Panc1 (cell line): ENCODE measurements at regions of chr2 and their contacts with region 1.

Region 1: GRCh38 chr2:61538200-61538919 is at the start of gene XPO1:
- DNase-seq: peak; percentile 97
- ATAC-seq: peak; percentile 93
- H3K4me3 ChIP-seq: peak within 1 kb of the TSS; percentile 95 to 97
- H3K27ac ChIP-seq: peak within 1 kb of the TSS; percentile 97
- H3K4me1 ChIP-seq: peaks cover 27% of the 10 kb centered on the region
- H3K27me3 ChIP-seq: no peaks in the 10 kb centered on the region
- CTCF ChIP-seq: no peak
- total RNA-seq, gene XPO1: 189 TPM

Region 2: DNA sequence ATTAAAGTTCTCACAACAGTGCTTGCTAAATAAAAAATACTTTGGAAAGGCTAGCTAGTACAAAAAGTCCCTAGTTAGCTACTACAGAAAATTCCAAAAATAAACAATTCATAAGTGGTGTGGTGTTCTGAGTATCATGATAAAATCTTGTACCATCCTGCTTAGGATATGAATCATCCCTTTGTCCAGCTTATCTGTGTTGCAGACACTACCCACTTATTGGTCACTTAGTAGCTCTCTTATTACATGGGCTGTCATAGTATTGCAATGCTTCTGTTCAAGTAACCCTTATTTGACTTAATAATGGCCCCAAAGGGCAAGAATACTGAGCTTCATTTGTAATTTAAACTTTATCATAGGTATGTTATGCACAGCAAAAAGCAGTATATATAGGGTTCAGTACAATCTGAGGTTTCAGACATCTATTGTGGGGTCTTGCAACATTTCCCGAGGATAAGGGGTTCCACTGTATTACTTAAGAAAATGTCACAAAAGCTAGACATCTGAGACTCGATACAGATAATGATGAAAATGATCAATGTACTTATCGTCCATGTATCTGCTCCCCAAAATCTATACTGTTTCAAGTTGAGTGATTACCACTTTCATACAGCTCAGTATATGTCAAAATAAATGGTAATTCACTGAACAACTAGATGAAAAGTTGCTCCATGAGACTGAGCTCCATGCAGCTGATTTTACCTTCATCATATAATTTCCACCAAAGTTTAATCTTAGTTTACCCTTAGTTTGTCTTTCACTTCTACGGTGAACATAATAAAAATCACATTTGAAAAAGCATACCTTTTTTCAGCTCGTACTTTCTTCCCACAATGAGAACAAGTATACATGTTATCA is 282.6 kb before region 1 on chr2:
- CTCF ChIA-PET with region 1: no interaction called
- POLR2A ChIA-PET with region 1: no interaction called
- in situ Hi-C with region 1: no loop called
- intact Hi-C with region 1: no loop called
- DNase-seq: no peak
- ATAC-seq: peak; percentile 71; the same call in 1 of the 2 replicates
- H3K4me3 ChIP-seq: no peak overlapping the region
- H3K27ac ChIP-seq: no peak overlapping the region
- H3K4me1 ChIP-seq: no peaks in the 10 kb centered on the region
- H3K27me3 ChIP-seq: no peaks in the 10 kb centered on the region
- CTCF ChIP-seq: no peak

Region 3: GRCh38 chr2:61450144-61450543 is 88.2 kb before region 1 on chr2:
- CTCF ChIA-PET with region 1: no interaction called
- POLR2A ChIA-PET with region 1: no interaction called
- in situ Hi-C with region 1: no loop called
- intact Hi-C with region 1: no loop called
- DNase-seq: no peak
- ATAC-seq: no peak
- H3K4me3 ChIP-seq: no peak overlapping the region
- H3K27ac ChIP-seq: no peak overlapping the region
- H3K4me1 ChIP-seq: no peaks in the 10 kb centered on the region
- H3K27me3 ChIP-seq: no peaks in the 10 kb centered on the region
- CTCF ChIP-seq: no peak

Region 4: DNA sequence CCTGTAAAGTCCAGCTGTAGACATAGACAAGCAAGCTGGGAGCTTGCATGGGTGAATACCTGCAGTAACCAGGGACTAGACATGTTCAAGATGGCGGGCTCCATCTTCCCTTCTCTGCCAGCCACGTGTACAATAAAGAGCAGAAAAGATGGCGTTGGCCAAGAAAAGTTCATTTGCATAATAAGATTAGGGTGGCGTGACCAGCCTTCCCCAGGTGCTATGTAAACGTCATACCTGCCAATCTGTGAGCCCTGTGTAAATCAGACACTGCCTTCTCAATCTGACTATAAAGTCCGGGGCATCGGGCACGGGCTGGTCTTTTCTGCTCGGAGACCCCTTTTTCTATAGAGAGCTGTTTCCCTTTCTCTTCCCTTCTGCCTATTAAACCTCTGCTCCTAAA is 101.4 kb after region 1 on chr2:
- CTCF ChIA-PET with region 1: no interaction called
- POLR2A ChIA-PET with region 1: no interaction called
- in situ Hi-C with region 1: no loop called
- intact Hi-C with region 1: loop called (anchors 5 kb)
- DNase-seq: no peak
- ATAC-seq: no peak
- H3K4me3 ChIP-seq: no peak overlapping the region
- H3K27ac ChIP-seq: no peak overlapping the region
- H3K4me1 ChIP-seq: peaks cover 9% of the 10 kb centered on the region
- H3K27me3 ChIP-seq: no peaks in the 10 kb centered on the region
- CTCF ChIP-seq: no peak

Region 5: DNA sequence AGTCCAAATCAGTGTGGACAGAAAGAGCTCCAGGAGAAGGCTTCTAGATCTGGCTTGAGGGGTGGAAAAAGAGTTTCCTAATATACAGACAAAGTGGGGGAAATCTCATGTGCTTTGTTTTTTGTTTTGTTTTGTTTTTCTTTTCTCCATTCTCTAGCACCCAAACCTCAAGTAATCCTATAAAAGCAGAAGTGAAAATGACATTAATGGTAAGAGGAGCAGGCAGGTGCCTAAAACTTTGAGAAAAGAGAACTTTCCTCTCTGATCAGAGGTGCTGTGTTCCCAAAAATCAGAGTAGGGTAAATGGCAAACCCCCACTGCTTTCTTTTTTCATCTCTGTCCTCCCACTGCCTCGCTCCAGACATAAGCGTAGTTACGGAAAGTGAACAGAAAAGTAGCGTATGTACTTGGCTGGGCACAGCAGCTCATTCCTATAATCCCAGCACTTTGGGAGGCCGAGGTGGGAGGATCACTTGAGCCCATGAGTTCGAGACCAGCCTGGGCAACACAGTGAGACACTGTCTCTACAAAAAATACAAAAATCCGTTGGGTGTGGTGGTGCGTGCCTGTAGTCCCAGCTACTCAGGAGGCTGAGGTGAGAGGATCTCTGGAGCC is 237.7 kb after region 1 on chr2:
- CTCF ChIA-PET with region 1: no interaction called
- POLR2A ChIA-PET with region 1: no interaction called
- in situ Hi-C with region 1: no loop called
- intact Hi-C with region 1: no loop called
- DNase-seq: no peak
- ATAC-seq: no peak
- H3K4me3 ChIP-seq: no peak overlapping the region
- H3K27ac ChIP-seq: no peak overlapping the region
- H3K4me1 ChIP-seq: no peaks in the 10 kb centered on the region
- H3K27me3 ChIP-seq: no peaks in the 10 kb centered on the region
- CTCF ChIP-seq: no peak

Region 6: GRCh38 chr2:61789807-61790602 is 251.6 kb after region 1 on chr2:
- CTCF ChIA-PET with region 1: no interaction called
- POLR2A ChIA-PET with region 1: no interaction called
- in situ Hi-C with region 1: no loop called
- intact Hi-C with region 1: loop called (anchors 10 kb)
- DNase-seq: no peak
- ATAC-seq: no peak
- H3K4me3 ChIP-seq: no peak overlapping the region
- H3K27ac ChIP-seq: no peak overlapping the region
- H3K4me1 ChIP-seq: no peaks in the 10 kb centered on the region
- H3K27me3 ChIP-seq: no peaks in the 10 kb centered on the region; the same call in 1 of the 2 replicates
- CTCF ChIP-seq: no peak

Region 7: GRCh38 chr2:62362561-62362960 is 824.2 kb after region 1 on chr2:
- CTCF ChIA-PET with region 1: no interaction called
- POLR2A ChIA-PET with region 1: no interaction called
- in situ Hi-C with region 1: no loop called
- intact Hi-C with region 1: no loop called
- DNase-seq: no peak
- ATAC-seq: peak; percentile 26; the same call in 1 of the 2 replicates
- H3K4me3 ChIP-seq: no peak overlapping the region
- H3K27ac ChIP-seq: no peak overlapping the region
- H3K4me1 ChIP-seq: no peaks in the 10 kb centered on the region
- H3K27me3 ChIP-seq: no peaks in the 10 kb centered on the region
- CTCF ChIP-seq: no peak